Motor neuron (in vitro differentiated cells): ENCODE measurements at regions of chr2 and their contacts with region 1.

Region 1: GRCh38 chr2:26970244-26970920 is at the start of gene MAPRE3:
- ATAC-seq: peak; percentile 83 to 96 (median 86)
- H3K4me3 ChIP-seq: peak within 1 kb of the TSS; percentile 61 to 88 (median 77)
- H3K27ac ChIP-seq: peak within 1 kb of the TSS; percentile 89
- H3K4me1 ChIP-seq: peaks cover 15 to 19% of the 10 kb centered on the region in 2 donors
- total RNA-seq, gene MAPRE3: 8.7 to 44.8 (median 26.8) TPM

Region 2: GRCh38 chr2:27016801-27017325 is 46.5 kb after region 1 on chr2:
- in situ Hi-C with region 1: loop called in 1 of 9 experiments (anchors 10 kb)
- ATAC-seq: peak in 5 of 8 experiments; percentile 10 to 70 (median 20)
- H3K4me3 ChIP-seq: no peak overlapping the region
- H3K27ac ChIP-seq: no peak overlapping the region
- H3K4me1 ChIP-seq: peaks cover 19 to 23% of the 10 kb centered on the region in 2 donors

Region 3: DNA sequence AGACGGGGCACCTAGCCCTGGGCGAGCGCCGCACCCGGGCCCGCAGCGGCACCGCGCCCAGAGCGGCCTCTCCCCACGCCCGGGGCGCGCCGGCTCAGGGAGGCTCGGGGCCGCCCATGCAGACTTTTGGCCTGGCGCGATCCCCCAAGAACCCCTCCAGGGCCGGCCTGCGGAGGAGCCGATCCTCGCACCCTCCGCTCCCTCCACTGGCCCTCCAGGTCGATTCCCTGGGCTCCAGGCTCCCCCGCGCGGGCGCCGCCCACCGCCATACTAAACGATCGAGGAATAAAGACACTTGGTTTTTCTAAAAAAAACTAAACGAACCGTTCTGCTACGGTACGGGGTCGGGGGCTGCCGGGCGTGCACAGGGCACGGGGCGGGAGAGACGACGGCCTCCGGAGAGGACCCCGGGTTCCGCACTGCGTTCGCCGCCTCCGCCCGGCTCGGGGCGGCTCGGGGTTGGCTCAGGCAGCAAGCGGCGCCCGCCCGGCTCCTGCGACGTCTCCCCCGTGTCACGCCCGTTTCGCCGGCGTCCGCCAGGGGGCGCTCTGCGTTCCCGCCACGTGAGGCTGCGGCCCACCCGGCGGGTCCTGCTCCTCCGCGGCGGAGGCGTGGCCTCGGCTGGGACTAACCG is 115.8 kb after region 1 on chr2:
- in situ Hi-C with region 1: loop called in 1 of 9 experiments (anchors 25 kb)
- ATAC-seq: peak; percentile 78 to 89 (median 82)
- H3K4me3 ChIP-seq: peak overlapping the region; percentile 45 to 51 (median 46)
- H3K27ac ChIP-seq: peak overlapping the region; percentile 74 to 85
- H3K4me1 ChIP-seq: peaks cover 19% of the 10 kb centered on the region in 2 donors

Region 4: DNA sequence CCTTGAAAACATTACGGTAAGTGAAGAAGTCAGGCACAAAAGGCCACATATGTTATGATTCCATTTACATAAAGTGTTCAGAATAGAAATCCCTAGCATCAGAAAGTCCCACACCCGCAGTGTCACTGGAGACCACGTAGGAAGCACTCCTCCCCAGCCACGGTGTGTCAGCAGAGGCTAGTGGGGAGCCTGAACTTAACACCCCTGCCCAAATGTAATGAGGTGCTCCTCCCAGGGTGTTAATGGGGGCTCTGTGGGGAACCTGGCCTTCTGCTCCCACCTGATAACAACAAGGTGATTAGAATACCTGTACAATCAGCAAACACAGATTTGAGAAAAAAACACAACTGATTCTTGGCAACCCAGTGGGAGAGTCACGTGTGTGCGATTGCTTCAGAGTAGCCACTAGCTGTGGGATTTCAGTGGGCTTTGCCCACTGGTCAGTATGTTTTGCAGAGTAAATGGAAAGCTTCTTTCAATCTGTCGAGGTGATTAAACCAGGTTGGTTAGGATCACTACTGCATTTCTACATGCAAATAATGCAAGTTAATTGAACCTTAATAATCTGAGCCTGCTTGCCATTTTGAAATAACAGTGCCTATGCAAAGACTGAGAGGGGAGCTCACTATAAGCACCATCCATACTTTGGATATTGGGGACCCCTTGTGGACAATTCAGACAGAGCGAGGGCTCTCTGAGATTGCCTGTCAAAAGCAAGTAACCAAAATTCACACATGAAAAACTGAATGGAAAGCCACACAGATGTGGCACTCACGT is 220.9 kb after region 1 on chr2:
- in situ Hi-C with region 1: loop called in 1 of 9 experiments (anchors 25 kb)
- ATAC-seq: peak; percentile 75 to 99 (median 90)
- H3K4me3 ChIP-seq: no peak overlapping the region
- H3K27ac ChIP-seq: no peak overlapping the region
- H3K4me1 ChIP-seq: no peaks in the 10 kb centered on the region

Region 5: DNA sequence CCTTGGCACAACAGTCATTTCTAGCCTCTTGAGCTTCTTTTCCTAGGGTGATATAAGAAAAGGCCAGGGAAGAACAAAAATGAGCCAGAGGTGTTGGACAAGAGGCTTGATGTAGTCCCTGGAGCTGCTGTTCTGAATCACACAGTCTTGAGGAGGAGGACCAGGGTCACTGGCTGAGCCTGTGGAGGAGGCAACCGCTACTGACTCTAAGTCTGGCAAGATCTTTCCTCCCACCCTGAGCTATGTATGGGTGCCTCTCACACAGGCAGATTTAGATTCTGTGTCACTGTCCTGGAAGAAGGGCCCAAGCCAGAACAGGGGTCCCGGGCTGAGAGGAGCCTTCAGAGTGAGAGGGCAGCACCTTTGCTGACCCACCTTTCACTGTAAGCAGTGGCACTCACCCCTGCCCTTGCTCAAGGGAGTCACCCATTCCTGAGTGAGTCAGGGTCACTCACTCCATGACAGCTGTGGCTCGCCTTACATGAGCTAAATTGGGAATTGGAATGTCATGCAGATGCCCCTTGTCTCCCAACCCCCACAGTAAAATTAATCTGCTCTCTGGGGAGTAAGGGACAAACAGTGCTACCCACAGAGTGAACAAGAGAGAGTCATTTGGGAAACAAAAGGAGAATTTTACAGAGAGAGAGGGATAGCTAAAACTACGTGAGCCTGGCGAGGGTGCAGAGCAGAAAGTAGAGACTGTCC is 311.6 kb after region 1 on chr2 and contains the start of gene TRIM54:
- in situ Hi-C with region 1: loop called in 4 of 9 experiments (anchors 10 to 25 kb)
- ATAC-seq: peak in 7 of 8 experiments; percentile 19 to 70 (median 57)
- H3K4me3 ChIP-seq: no peak within 1 kb of the TSS
- H3K27ac ChIP-seq: no peak within 1 kb of the TSS
- H3K4me1 ChIP-seq: peaks cover 9 to 11% of the 10 kb centered on the region in 2 donors
- total RNA-seq, gene TRIM54: 0.25 to 1.00 (median 0.38) TPM in 7 of 8 experiments, not detected in the other

Region 6: GRCh38 chr2:27291865-27292264 is 321.5 kb after region 1 on chr2:
- in situ Hi-C with region 1: loop called in 4 of 9 experiments (anchors 10 to 25 kb)
- ATAC-seq: peak in 1 of 8 experiments; percentile 26
- H3K4me3 ChIP-seq: no peak overlapping the region
- H3K27ac ChIP-seq: no peak overlapping the region
- H3K4me1 ChIP-seq: peaks cover 0 to 2% of the 10 kb centered on the region in 2 donors